HAP-1 (cell line): ENCODE measurements at regions of chr22 and their contacts with region 1.

Region 1: GRCh38 chr22:18970176-18970947 is 34.3 kb upstream of the PRODH start:
- DNase-seq: peak; percentile 63 to 82
- H3K4me3 ChIP-seq: peak overlapping the region; percentile 53
- H3K4me1 ChIP-seq: 0 out of 2 replicates have a peak, but pooled peaks cover 2% of the 10 kb centered on the region
- H3K27me3 ChIP-seq: no peaks in the 10 kb centered on the region

Region 2: DNA sequence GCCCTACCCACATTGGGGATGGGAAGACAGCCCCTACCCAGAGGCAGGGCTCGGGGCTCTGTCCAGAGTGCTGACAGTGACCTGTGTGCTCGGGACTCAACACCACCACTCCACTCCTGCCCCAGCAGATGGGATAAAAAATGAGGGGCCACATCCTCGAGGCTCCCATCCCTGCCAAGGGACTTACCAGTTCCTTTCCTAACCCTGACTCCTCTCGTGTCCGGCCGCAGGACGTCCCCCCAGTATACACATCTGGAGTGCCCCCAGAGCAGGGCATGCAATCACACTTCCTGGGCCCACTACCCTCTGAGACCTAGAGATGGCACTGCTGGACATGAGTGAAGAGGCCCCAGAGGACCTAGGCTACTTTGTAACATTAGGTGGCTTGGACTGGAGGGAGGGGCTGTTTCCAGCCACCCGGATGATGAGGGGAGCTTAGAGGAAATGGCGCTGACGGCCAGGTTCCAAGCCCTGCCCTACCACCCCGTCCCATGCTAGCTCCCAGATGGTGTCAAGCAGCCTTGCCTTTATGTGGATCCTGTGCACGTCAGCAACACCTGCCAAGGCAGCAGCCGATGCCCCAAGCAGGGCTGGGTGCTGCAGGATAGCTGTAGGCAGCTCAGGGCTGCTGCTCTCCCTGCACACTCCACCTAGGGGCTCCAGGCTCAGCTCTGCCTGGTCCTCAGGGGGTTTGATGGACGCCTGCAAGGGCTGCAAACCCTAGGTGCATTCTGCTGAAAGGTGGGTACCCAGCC is 65.3 kb after region 1 on chr22:
- in situ Hi-C with region 1: loop called (anchors 10 kb)
- DNase-seq: peak in 1 of 2 experiments; percentile 41
- H3K4me3 ChIP-seq: no peak overlapping the region
- H3K4me1 ChIP-seq: no peaks in the 10 kb centered on the region
- H3K27me3 ChIP-seq: peaks cover under 1% of the 10 kb centered on the region; the same call in 1 of the 2 replicates

Region 3: GRCh38 chr22:19447388-19448075 is 477.2 kb after region 1 on chr22 and contains the start of gene C22orf39:
- in situ Hi-C with region 1: loop called (anchors 25 kb)
- DNase-seq: peak; percentile 92 to 96
- H3K4me3 ChIP-seq: peak within 1 kb of the TSS; percentile 55
- H3K4me1 ChIP-seq: peaks cover 20% of the 10 kb centered on the region
- H3K27me3 ChIP-seq: no peaks in the 10 kb centered on the region

Region 4: GRCh38 chr22:20271113-20271994 is 1301.0 kb after region 1 on chr22:
- in situ Hi-C with region 1: loop called (anchors 5 kb)
- DNase-seq: no peak
- H3K4me3 ChIP-seq: no peak overlapping the region
- H3K4me1 ChIP-seq: peaks cover 7% of the 10 kb centered on the region; the same call in 1 of the 2 replicates
- H3K27me3 ChIP-seq: no peaks in the 10 kb centered on the region